ENCODE measurements at regions of chr19 and their contacts with region 1.

Region 1: DNA sequence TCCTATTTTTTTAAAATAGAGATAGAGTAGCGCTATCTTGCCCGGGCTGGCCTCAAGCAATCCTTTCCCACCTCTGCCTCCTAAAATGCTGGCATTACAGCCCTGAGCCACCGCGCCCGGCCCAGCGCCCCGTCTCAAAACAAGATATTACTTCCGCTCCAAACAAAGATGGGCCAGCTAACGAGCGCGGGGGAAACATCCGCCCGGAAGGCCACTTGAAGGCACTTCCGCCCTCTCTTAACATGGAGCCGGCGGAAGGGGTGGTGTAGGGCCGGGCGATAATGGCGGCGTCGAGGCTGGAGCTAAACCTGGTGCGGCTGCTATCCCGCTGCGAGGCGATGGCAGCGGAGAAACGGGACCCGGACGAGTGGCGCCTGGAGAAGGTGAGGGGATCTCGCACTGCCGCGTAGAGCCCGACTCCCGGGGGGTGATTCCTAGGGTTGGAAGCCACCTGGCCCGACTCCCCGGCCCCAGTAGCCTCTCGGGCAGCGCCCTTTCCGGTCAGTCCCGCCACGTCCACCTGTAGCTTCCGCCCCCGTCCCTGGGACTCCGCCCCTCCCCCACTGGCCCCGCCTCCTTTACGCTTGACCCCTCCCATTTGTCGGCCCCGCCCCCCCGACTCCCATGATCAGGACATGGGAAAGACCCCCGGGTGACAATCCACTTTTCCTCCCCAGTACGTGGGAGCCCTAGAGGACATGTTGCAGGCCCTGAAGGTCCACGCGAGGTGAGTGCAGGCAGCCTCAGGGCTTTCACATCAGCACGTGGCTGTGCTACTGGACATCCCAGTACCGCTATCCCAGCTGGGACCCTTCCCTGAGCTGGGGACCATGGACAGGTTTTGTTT is at the start of gene USE1:
- DNase-seq: peak; percentile 93
- H3K4me3 ChIP-seq: peak within 1 kb of the TSS; percentile 37 to 61 (median 39)
- H3K27ac ChIP-seq: peak within 1 kb of the TSS; percentile 73 to 92 (median 89)
- H3K4me1 ChIP-seq: peaks cover 8 to 12% of the 10 kb centered on the region in 2 donors
- H3K27me3 ChIP-seq: no peaks in the 10 kb centered on the region
- CTCF ChIP-seq: no peak
- POLR2A ChIP-seq: peak in 1 of 2 donors; percentile 65
- total RNA-seq, gene USE1: 21.4 to 36.0 (median 27.4) TPM

Region 2: DNA sequence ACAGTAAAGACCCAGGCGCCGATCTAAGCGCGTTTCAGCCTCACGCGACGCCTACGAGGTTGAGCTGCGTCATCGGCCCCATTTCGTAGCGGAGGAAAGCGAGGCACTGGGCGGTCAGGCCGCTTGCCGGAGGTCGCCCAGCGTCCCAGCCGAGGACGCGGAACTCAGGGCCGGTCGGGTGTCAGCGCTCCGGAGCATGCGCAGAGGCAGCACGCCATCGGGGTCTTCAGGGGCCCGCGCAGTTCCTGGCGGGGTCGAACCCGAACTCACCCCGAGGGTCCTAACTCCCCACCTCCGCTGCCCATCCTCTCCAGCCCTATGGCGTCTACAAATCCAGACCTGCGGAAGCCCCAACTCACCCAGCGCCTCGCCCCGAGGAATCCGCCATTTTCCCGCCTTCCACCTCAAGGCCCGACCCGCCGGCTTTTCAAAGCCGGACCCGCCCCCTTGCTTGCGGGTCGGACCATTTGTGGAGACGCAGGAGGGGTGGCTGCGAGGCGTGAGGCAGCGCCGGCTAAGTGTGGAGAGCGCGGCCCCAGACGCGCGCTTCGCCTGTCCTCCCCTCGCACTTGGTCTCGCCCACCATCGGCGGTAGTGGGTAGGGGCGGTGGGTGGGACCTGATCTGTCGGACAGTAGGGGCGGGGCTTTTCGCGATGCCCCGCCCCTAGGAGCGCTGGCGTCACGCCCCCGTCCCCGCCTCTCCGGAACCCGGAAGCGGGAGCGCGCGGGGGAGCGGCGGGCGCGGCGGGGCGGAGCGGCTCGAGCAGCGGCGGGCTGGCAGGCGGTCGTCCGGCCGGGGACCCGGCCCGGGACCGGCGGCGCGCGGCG is 140.1 kb before region 1 on chr19 and contains the starts of genes HAUS8 and MYO9B:
- intact Hi-C with region 1: loop called (anchors 10 kb)
- DNase-seq: peak; percentile 99
- H3K4me3 ChIP-seq: peak within 1 kb of the TSS; percentile 66 to 91 (median 76)
- H3K27ac ChIP-seq: peak within 1 kb of the TSS; percentile 27 to 61 (median 44)
- H3K4me1 ChIP-seq: peaks cover 14 to 34% of the 10 kb centered on the region in 2 donors
- H3K27me3 ChIP-seq: no peaks in the 10 kb centered on the region
- CTCF ChIP-seq: peak in 1 of 6 experiments; percentile 17
- POLR2A ChIP-seq: peak in 1 of 2 donors; percentile 85
- total RNA-seq, gene HAUS8: 6.4 to 9.1 (median 6.8) TPM
- total RNA-seq, gene MYO9B: 33.7 to 52.9 (median 44.6) TPM

Region 3: GRCh38 chr19:17248011-17248776 is 32.8 kb after region 1 on chr19:
- intact Hi-C with region 1: no loop called
- DNase-seq: no peak
- H3K4me3 ChIP-seq: no peak overlapping the region
- H3K27ac ChIP-seq: no peak overlapping the region
- H3K4me1 ChIP-seq: peaks cover 15% of the 10 kb centered on the region in 2 donors
- H3K27me3 ChIP-seq: no peaks in the 10 kb centered on the region
- CTCF ChIP-seq: no peak
- POLR2A ChIP-seq: no peak

Region 4: GRCh38 chr19:17266975-17267788 is 51.8 kb after region 1 on chr19 and contains the start of gene BABAM1:
- intact Hi-C with region 1: loop called (anchors 10 kb)
- DNase-seq: peak; percentile 96 to 97
- H3K4me3 ChIP-seq: peak within 1 kb of the TSS; percentile 40 to 46 (median 46)
- H3K27ac ChIP-seq: peak within 1 kb of the TSS in 2 of 3 donors; percentile 13 to 57
- H3K4me1 ChIP-seq: peaks cover 5% of the 10 kb centered on the region in 2 donors
- H3K27me3 ChIP-seq: no peaks in the 10 kb centered on the region
- CTCF ChIP-seq: no peak
- POLR2A ChIP-seq: peak in 1 of 2 donors; percentile 41
- total RNA-seq, gene BABAM1: 49.6 to 87.5 (median 71.1) TPM